WTC11 (cell line): ENCODE measurements at regions of chr22 and their contacts with region 1.

Region 1: GRCh38 chr22:22959147-22959827 is 71.7 kb downstream of the IGLL5 start:
- DNase-seq: peak; percentile 84
- ATAC-seq: peak; percentile 34
- H3K4me3 Mint-ChIP-seq: no peak overlapping the region
- H3K27ac Mint-ChIP-seq: no peak overlapping the region
- H3K4me1 Mint-ChIP-seq: peaks cover 9% of the 10 kb centered on the region
- H3K27me3 Mint-ChIP-seq: peaks cover 52% of the 10 kb centered on the region
- CTCF ChIP-seq: peak; percentile 83

Region 2: DNA sequence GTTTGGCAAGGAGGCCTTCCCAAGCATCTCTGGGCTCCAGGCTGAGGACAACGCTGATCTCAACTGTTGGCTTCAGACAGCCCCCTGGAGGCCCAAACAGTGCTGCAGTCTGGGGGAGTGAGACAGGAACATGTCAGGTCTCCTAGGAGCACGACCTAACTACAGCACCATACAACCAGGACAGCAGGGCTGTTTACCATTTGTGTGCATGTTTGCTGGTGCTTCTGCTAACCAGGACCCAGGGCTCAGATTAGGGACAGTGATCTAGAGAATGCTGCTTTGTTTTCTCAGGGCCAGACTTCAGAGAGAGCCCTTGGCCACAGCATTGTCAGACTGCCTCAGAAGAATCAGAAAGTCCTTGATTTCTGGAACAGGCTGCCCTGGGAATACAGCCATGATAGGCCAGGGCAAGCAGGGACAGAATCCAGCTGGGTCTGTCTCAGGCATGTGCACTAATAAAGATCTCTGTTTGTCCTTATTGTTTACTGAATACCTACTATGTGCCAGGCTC is 588.2 kb before region 1 on chr22:
- CTCF ChIA-PET with region 1: no interaction called
- POLR2A ChIA-PET with region 1: no interaction called
- DNase-seq: no peak
- ATAC-seq: peak; percentile 88
- H3K4me3 Mint-ChIP-seq: no peak overlapping the region
- H3K27ac Mint-ChIP-seq: no peak overlapping the region
- H3K4me1 Mint-ChIP-seq: no peaks in the 10 kb centered on the region
- H3K27me3 Mint-ChIP-seq: peaks cover 100% of the 10 kb centered on the region
- CTCF ChIP-seq: no peak

Region 3: DNA sequence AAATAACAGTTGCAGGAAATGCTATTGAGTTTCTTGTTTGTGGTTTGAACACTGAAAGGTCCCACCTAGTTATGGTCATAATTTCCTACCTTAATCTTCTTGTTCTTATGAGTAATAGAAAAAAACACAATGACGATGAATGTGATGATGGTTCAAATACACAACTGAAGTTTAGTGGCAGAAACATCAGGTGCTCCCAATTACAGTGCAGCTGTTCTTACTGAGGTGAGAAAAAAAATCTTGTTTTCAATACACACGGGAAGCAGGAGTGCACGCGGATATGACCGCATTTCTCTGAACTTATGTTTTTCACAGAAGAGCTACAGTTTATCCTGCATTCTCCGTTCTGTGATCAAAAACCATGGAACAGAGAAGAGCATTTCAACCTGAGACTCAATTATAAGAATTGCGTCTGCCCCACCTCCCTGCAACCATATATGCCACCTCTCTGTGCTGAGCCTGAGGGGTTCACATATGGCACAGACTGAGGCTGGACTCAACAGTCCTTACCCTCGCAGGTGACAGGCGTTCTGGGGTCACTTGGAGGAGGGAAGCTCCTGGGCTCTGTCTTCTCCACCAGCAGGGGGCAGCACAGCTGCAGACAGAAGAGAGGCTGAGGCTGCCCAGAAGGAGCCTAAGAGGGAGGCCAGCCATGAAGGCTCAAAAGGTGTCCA is 171.4 kb before region 1 on chr22:
- CTCF ChIA-PET with region 1: interaction called, 51 read pairs
- POLR2A ChIA-PET with region 1: interaction called, 4 read pairs
- DNase-seq: peak; percentile 82
- ATAC-seq: peak; percentile 90
- H3K4me3 Mint-ChIP-seq: no peak overlapping the region
- H3K27ac Mint-ChIP-seq: no peak overlapping the region
- H3K4me1 Mint-ChIP-seq: no peaks in the 10 kb centered on the region
- H3K27me3 Mint-ChIP-seq: peaks cover 88% of the 10 kb centered on the region
- CTCF ChIP-seq: peak; percentile 66; the same call in 1 of the 2 replicates

Region 4: GRCh38 chr22:22870577-22871404 is 88.5 kb before region 1 on chr22:
- CTCF ChIA-PET with region 1: interaction called, 23 read pairs
- POLR2A ChIA-PET with region 1: no interaction called
- DNase-seq: no peak
- ATAC-seq: peak; percentile 89
- H3K4me3 Mint-ChIP-seq: no peak overlapping the region
- H3K27ac Mint-ChIP-seq: no peak overlapping the region
- H3K4me1 Mint-ChIP-seq: no peaks in the 10 kb centered on the region
- H3K27me3 Mint-ChIP-seq: peaks cover 89% of the 10 kb centered on the region
- CTCF ChIP-seq: peak; percentile 12; the same call in 1 of the 2 replicates

Region 5: DNA sequence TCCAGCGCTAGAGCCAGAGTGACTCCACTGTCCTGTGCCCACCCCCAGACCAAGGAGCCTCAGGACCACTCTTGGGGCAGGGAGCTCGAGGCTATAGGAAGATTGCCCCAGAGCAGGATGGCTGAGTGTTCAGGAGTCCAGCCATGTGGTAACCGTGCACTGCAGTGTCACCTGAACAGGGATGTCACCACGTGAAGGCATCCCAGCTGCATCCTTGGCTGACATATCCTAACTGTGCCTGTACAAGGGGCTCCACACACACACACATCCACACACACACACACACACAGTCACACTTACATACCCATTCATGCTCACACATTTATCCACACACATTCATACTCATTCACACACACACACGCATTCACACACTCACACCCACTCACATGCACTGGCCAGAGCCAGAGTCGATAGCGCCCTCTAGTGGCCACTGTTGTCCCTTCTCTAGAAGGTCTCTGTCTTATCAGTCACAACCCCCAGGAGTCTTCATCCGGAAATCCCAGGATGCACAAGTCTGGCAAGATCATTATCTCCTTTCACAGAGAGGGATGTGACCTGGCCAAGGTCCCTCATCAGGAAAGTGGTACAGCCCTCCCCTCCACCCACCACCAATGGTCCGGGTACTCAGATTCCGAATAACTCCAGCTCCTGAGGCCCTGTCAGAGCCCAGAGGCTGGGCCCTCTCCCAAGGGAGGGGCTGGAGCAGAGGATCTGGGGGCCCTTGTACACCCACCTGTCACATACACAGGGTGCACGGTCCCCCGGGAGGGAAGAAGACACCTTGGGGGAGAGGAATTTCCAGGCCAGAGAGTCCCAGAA is 16.6 kb before region 1 on chr22:
- CTCF ChIA-PET with region 1: interaction called, 34 read pairs
- POLR2A ChIA-PET with region 1: no interaction called
- DNase-seq: peak; percentile 91
- ATAC-seq: peak; percentile 88
- H3K4me3 Mint-ChIP-seq: no peak overlapping the region
- H3K27ac Mint-ChIP-seq: no peak overlapping the region
- H3K4me1 Mint-ChIP-seq: no peaks in the 10 kb centered on the region
- H3K27me3 Mint-ChIP-seq: peaks cover 51% of the 10 kb centered on the region
- CTCF ChIP-seq: peak; percentile 94

Region 6: GRCh38 chr22:23102776-23103175 is 143.5 kb after region 1 on chr22:
- CTCF ChIA-PET with region 1: interaction called, 14 read pairs
- POLR2A ChIA-PET with region 1: no interaction called
- DNase-seq: no peak
- ATAC-seq: no peak
- H3K4me3 Mint-ChIP-seq: no peak overlapping the region
- H3K27ac Mint-ChIP-seq: no peak overlapping the region
- H3K4me1 Mint-ChIP-seq: no peaks in the 10 kb centered on the region
- H3K27me3 Mint-ChIP-seq: no peaks in the 10 kb centered on the region
- CTCF ChIP-seq: no peak

Region 7: GRCh38 chr22:23152315-23153113 is 193.2 kb after region 1 on chr22:
- CTCF ChIA-PET with region 1: interaction called, 24 read pairs
- POLR2A ChIA-PET with region 1: no interaction called
- DNase-seq: no peak
- ATAC-seq: no peak
- H3K4me3 Mint-ChIP-seq: no peak overlapping the region
- H3K27ac Mint-ChIP-seq: no peak overlapping the region
- H3K4me1 Mint-ChIP-seq: peaks cover 47% of the 10 kb centered on the region
- H3K27me3 Mint-ChIP-seq: peaks cover 4% of the 10 kb centered on the region
- CTCF ChIP-seq: no peak